GM10248 (cell line): ENCODE measurements at regions of chr9 and their contacts with region 1.

Region 1: DNA sequence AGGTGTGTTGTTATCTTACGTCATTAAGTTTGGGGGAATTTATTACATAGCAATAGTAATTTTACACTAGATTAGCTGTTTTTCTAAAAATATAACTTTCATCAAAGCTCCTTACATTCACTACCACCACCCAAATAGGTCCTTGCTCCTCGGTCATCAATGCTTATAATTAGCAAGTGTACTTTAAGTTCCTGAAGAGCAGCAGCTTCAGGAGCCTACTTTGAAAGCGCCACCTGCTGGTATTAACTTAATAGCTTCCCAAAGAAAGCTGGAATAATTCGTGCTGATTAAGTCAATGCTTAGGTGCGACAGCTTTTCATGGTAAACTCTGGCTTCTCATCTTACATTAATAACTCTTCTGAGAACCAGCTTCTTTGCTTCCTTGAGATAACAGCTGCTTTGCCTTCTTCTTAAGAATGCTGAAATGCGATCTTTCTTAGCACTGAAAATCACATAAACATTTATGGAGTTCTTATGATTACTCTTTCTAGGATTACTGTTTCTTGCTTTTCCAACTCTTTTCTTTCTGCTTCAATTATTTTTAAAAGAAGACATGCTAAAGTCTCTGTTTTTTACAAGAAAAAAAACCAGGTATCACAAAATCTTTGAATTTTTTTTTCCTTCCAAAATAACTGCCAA is 10.0 kb upstream of the C5 start:
- DNase-seq: peak; percentile 55
- CTCF ChIP-seq: peak; percentile 76

Region 2: GRCh38 chr9:120755827-120756434 is 304.2 kb before region 1 on chr9:
- CTCF ChIA-PET with region 1: interaction called, 80 read pairs
- POLR2A ChIA-PET with region 1: no interaction called
- DNase-seq: peak; percentile 70
- CTCF ChIP-seq: peak; percentile 79

Region 3: GRCh38 chr9:120985810-120986222 is 74.3 kb before region 1 on chr9:
- CTCF ChIA-PET with region 1: interaction called, 37 read pairs
- POLR2A ChIA-PET with region 1: no interaction called
- DNase-seq: peak; percentile 48
- CTCF ChIP-seq: peak; percentile 66

Region 4: GRCh38 chr9:121038804-121039203 is 21.3 kb before region 1 on chr9:
- CTCF ChIA-PET with region 1: interaction called, 12 read pairs
- POLR2A ChIA-PET with region 1: no interaction called
- DNase-seq: no peak
- CTCF ChIP-seq: no peak

Region 5: GRCh38 chr9:121048618-121049017 is 11.5 kb before region 1 on chr9:
- CTCF ChIA-PET with region 1: interaction called, 56 read pairs
- POLR2A ChIA-PET with region 1: no interaction called
- DNase-seq: no peak
- CTCF ChIP-seq: no peak

Region 6: GRCh38 chr9:121074635-121075385 is 14.7 kb after region 1 on chr9 and contains the start of gene CNTRL:
- CTCF ChIA-PET with region 1: interaction called, 78 read pairs
- POLR2A ChIA-PET with region 1: no interaction called
- DNase-seq: peak; percentile 89
- CTCF ChIP-seq: no peak

Region 7: DNA sequence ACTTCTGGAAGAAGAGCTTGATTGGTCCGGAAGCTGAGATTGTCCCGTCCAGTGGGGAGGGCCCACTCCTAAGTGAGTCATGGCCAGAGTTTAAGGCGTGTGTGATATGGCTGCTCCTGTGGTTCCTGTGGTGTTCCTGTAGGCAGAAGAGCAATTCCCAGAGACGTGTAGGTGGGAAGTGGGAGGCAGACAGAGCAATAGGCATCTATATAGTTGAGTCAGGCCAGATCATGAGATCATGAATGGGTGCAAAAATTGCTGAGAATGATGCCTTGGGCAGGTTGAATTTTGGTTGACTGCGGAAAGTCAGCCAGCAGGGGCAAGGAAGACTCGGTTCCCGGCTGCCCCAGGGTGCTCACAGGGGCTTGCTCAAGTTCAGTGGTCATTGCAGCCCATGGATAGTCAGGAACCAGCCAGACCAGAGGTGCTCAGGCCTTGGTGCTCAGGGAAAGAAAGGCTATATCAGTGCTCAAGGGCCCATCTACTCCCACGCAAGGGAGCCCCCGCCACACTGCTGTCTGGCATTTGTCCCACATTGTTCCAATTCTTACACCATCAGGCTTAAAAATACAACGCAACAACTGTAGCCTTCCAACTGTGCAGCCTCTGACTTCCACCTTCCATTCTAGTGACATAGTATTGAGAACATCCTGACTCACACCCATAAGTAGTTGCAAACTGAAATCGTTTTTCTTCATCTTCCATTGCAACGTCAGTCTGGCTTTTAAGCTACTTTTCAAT is 186.9 kb after region 1 on chr9:
- CTCF ChIA-PET with region 1: no interaction called
- POLR2A ChIA-PET with region 1: no interaction called
- DNase-seq: no peak
- CTCF ChIP-seq: no peak

Region 8: GRCh38 chr9:121353241-121354061 is 293.3 kb after region 1 on chr9:
- CTCF ChIA-PET with region 1: no interaction called
- POLR2A ChIA-PET with region 1: no interaction called
- DNase-seq: peak; percentile 72
- CTCF ChIP-seq: no peak